CD14-positive monocyte (primary cell): ENCODE measurements at regions of chr4 and their contacts with region 1.

Region 1: DNA sequence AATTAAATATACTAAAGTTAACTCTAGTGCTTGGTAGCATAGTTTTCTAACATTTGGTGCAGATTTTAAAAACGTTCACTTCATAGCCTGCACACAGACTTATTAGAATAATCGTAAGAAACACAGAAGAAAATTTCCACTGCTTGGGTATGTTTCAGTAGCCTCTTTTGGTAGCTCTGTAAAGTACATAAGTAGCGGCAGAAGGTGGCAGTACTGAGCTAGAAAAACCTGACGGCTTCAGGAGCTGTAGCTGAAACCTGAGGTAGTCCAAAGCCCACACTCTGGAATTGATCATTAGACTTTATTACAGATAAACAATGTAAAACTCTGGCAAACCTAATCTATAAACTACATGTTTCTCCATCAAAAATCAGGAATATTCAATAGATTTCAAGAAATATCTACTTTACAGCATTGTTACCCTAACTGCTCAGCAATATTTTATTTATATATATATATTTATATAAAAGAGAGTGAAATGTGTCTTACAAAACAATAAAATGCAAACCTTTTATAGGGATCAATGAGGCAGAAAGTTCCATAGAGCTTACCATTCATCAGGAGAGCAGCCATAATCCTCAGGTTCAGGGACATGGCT is 88.2 kb downstream of the ATP8A1 start:
- DNase-seq: peak; percentile 25 to 62 (median 48)
- H3K4me3 ChIP-seq: no peak overlapping the region
- H3K4me3 Mint-ChIP-seq: no peak overlapping the region
- H3K27ac ChIP-seq: no peak overlapping the region
- H3K27ac Mint-ChIP-seq: no peak overlapping the region
- H3K4me1 ChIP-seq: no peaks in the 10 kb centered on the region
- H3K4me1 Mint-ChIP-seq: no peaks in the 10 kb centered on the region
- H3K27me3 ChIP-seq: no peaks in the 10 kb centered on the region
- H3K27me3 Mint-ChIP-seq: no peaks in the 10 kb centered on the region
- CTCF ChIP-seq: peak; percentile 83

Region 2: DNA sequence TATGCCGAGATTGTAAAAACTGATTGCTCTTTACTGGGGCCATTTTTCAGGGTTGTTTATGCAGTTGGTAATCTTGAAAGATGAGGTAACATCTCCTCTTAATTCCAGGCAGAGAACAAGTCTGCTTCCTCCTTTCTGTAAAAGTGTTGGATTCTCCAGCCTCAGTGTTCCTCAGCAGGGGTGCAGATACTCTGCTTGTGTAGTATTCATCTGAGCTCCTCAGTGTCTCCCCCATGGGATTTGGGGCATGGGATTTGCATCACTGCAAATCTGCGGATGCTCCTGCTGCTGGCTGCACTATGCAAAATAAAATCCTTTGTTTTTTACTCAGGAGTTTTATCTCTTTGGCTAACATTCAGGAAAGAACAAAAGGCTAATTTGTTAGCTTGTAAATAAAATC is 193.1 kb after region 1 on chr4:
- intact Hi-C with region 1: loop called in 1 of 2 experiments (anchors 5 kb)
- DNase-seq: no peak
- H3K4me3 ChIP-seq: no peak overlapping the region
- H3K4me3 Mint-ChIP-seq: no peak overlapping the region
- H3K27ac ChIP-seq: no peak overlapping the region
- H3K27ac Mint-ChIP-seq: no peak overlapping the region
- H3K4me1 ChIP-seq: no peaks in the 10 kb centered on the region
- H3K4me1 Mint-ChIP-seq: no peaks in the 10 kb centered on the region
- H3K27me3 ChIP-seq: no peaks in the 10 kb centered on the region
- H3K27me3 Mint-ChIP-seq: no peaks in the 10 kb centered on the region
- CTCF ChIP-seq: no peak

Region 3: GRCh38 chr4:42865572-42866189 is 297.0 kb after region 1 on chr4:
- intact Hi-C with region 1: loop called (anchors 5 kb)
- DNase-seq: peak; percentile 15 to 36 (median 33)
- H3K4me3 ChIP-seq: no peak overlapping the region
- H3K4me3 Mint-ChIP-seq: no peak overlapping the region
- H3K27ac ChIP-seq: no peak overlapping the region
- H3K27ac Mint-ChIP-seq: no peak overlapping the region
- H3K4me1 ChIP-seq: no peaks in the 10 kb centered on the region
- H3K4me1 Mint-ChIP-seq: no peaks in the 10 kb centered on the region
- H3K27me3 ChIP-seq: no peaks in the 10 kb centered on the region
- H3K27me3 Mint-ChIP-seq: peaks cover 2 to 7% (median 6%) of the 10 kb centered on the region in 3 donors
- CTCF ChIP-seq: peak; percentile 82